ENCODE measurements at regions of chr19 and their contacts with region 1.

Region 1: GRCh38 chr19:39412100-39412866 is at the start of gene PLEKHG2:
- DNase-seq: peak; percentile 98
- H3K4me3 Mint-ChIP-seq: peak within 1 kb of the TSS; percentile 89
- H3K27ac Mint-ChIP-seq: peak within 1 kb of the TSS; percentile 96
- H3K4me1 Mint-ChIP-seq: peaks cover 39% of the 10 kb centered on the region
- H3K27me3 Mint-ChIP-seq: peaks cover 2% of the 10 kb centered on the region
- total RNA-seq, gene PLEKHG2: 82.4 to 93.0 TPM

Region 2: GRCh38 chr19:39335168-39335548 is 77.1 kb before region 1 on chr19:
- CTCF ChIA-PET with region 1: interaction called, 13 read pairs
- POLR2A ChIA-PET with region 1: interaction called, 18 read pairs
- DNase-seq: peak; percentile 44
- H3K4me3 Mint-ChIP-seq: peak overlapping the region; percentile 98
- H3K27ac Mint-ChIP-seq: peak overlapping the region; percentile 97
- H3K4me1 Mint-ChIP-seq: peaks cover 62% of the 10 kb centered on the region
- H3K27me3 Mint-ChIP-seq: no peaks in the 10 kb centered on the region

Region 3: DNA sequence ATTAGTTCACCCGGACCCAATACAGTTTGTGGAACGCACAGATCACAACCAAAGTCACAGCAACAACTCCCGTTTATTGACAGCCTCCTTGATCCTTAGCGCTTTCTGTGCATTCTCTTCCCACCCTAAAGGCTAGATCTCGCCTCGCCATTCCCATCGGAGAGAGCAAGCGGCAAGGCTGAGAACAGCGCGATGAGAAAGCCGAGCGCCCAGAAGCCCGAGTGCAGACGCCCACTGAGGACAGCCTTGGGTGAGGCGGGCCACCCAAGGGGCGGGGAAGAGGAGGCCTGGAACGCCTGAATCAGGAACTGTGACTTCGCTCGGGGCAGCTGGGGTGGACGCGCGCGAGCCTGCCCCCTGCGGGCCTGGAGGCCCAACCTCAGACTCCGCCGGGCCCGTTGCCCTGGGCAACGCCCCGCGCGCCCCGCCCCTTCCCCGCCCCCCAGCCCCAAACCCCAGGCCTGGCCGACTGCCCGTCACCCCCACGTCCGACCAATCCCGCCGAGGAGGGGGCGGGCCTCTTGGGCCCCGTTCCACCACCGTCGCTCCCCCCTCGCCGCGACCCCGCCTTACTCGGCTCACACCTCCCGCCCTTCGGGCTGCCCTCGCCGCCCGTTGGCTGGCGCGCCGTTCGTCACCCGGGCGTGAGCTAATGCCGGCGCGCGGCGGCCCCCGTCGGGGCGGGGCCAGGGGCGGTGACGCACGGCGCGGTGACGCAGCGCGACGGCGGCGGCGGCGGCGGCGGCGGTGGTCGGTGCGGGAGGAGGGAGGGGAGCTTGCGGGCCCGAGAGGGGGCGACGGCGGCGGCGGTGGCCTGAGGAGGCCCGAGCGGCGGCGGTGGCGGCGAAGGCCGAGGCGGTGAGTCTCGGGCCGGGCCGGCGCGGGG is 70.3 kb before region 1 on chr19 and contains the start of gene SAMD4B:
- CTCF ChIA-PET with region 1: interaction called, 13 read pairs
- POLR2A ChIA-PET with region 1: interaction called, 20 read pairs
- DNase-seq: peak; percentile 99
- H3K4me3 Mint-ChIP-seq: peak within 1 kb of the TSS; percentile 98
- H3K27ac Mint-ChIP-seq: peak within 1 kb of the TSS; percentile 95
- H3K4me1 Mint-ChIP-seq: peaks cover 71% of the 10 kb centered on the region
- H3K27me3 Mint-ChIP-seq: no peaks in the 10 kb centered on the region
- total RNA-seq, gene SAMD4B: 53.9 to 54.8 TPM

Region 4: GRCh38 chr19:39390755-39391592 is 21.3 kb before region 1 on chr19 and contains the starts of genes MED29 and PAF1:
- CTCF ChIA-PET with region 1: interaction called, 34 read pairs
- POLR2A ChIA-PET with region 1: interaction called, 195 read pairs
- DNase-seq: peak; percentile 97
- H3K4me3 Mint-ChIP-seq: peak within 1 kb of the TSS; percentile 90
- H3K27ac Mint-ChIP-seq: peak within 1 kb of the TSS; percentile 97
- H3K4me1 Mint-ChIP-seq: peaks cover 52% of the 10 kb centered on the region
- H3K27me3 Mint-ChIP-seq: no peaks in the 10 kb centered on the region
- total RNA-seq, gene MED29: 32.3 to 34.5 TPM
- total RNA-seq, gene PAF1: 44.0 to 47.2 TPM

Region 5: GRCh38 chr19:39397360-39398296 is 14.7 kb before region 1 on chr19:
- CTCF ChIA-PET with region 1: interaction called, 113 read pairs
- POLR2A ChIA-PET with region 1: interaction called, 195 read pairs
- DNase-seq: peak; percentile 95
- H3K4me3 Mint-ChIP-seq: peak overlapping the region; percentile 68
- H3K27ac Mint-ChIP-seq: peak overlapping the region; percentile 96
- H3K4me1 Mint-ChIP-seq: peaks cover 76% of the 10 kb centered on the region
- H3K27me3 Mint-ChIP-seq: no peaks in the 10 kb centered on the region

Region 6: GRCh38 chr19:39428283-39429112 is 16.2 kb after region 1 on chr19:
- CTCF ChIA-PET with region 1: interaction called, 4 read pairs
- POLR2A ChIA-PET with region 1: interaction called, 157 read pairs
- DNase-seq: no peak
- H3K4me3 Mint-ChIP-seq: no peak overlapping the region
- H3K27ac Mint-ChIP-seq: no peak overlapping the region
- H3K4me1 Mint-ChIP-seq: peaks cover 34% of the 10 kb centered on the region
- H3K27me3 Mint-ChIP-seq: no peaks in the 10 kb centered on the region

Region 7: GRCh38 chr19:39590265-39590664 is 178.0 kb after region 1 on chr19:
- CTCF ChIA-PET with region 1: no interaction called
- POLR2A ChIA-PET with region 1: no interaction called
- DNase-seq: no peak
- H3K4me3 Mint-ChIP-seq: no peak overlapping the region
- H3K27ac Mint-ChIP-seq: no peak overlapping the region
- H3K4me1 Mint-ChIP-seq: no peaks in the 10 kb centered on the region
- H3K27me3 Mint-ChIP-seq: peaks cover 9% of the 10 kb centered on the region

Measured in activated CD4-positive, alpha-beta memory T cell treated with anti-CD3 and anti-CD28 coated beads, Interleukin-2, amount 10 ng/mL, durations not matched to agents 7 days and 5 days (primary cell).